H1 (cell line): ENCODE measurements at regions of chr7 and their contacts with region 1.

Region 1: DNA sequence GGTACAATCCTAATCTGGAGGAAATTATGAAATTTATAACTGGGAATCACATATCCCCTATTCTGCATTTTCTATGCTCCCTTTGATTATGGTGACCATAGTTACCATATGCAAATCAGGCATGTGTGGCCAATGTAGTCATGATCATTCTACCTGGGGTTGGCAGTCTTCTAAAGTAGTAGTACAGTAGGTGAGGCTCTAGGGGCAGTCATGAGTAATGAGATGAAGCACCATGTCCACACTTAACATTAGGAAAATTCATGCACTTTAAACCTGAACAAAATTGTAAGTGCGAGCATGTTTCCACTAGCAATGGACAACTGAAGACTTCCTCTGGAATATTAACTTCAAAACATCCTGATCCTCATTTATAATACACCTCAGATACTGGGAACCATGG is 545.9 kb downstream of the SUGCT start:
- DNase-seq: no peak
- H3K4me3 ChIP-seq: no peak overlapping the region
- H3K27ac ChIP-seq: no peak overlapping the region
- H3K4me1 ChIP-seq: no peaks in the 10 kb centered on the region
- H3K27me3 ChIP-seq: no peaks in the 10 kb centered on the region
- CTCF ChIP-seq: peak in 2 of 3 experiments; percentile 31 to 65; a peak in 2 of 4 replicates
- EP300 ChIP-seq: no peak
- POLR2A ChIP-seq: no peak
- RAD21 ChIP-seq: peak; percentile 28 to 41; a peak in 3 of 4 replicates

Region 2: DNA sequence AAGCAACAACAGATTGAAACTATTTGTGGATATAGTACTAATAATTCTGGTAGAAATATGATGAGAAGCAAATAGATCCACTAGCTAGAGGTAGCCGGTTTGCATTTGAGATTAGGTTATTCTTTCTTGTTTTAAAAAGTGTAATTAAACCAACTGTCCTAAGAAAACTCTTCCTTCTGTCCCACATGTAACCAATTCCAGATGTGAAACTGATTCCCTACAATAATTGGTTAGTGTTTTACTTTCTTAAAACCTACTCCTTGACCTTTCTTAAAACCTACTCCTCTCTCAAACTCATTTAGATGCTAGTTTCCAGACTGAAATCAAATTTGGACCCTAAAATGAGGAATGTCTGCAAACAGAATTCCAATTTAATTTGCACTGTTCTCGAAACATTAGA is 24.3 kb before region 1 on chr7:
- CTCF ChIA-PET with region 1: interaction called, 10 read pairs
- POLR2A ChIA-PET with region 1: no interaction called
- DNase-seq: no peak
- H3K4me3 ChIP-seq: no peak overlapping the region
- H3K27ac ChIP-seq: no peak overlapping the region
- H3K4me1 ChIP-seq: no peaks in the 10 kb centered on the region
- H3K27me3 ChIP-seq: no peaks in the 10 kb centered on the region
- CTCF ChIP-seq: no peak
- EP300 ChIP-seq: no peak
- POLR2A ChIP-seq: no peak
- RAD21 ChIP-seq: no peak

Region 3: DNA sequence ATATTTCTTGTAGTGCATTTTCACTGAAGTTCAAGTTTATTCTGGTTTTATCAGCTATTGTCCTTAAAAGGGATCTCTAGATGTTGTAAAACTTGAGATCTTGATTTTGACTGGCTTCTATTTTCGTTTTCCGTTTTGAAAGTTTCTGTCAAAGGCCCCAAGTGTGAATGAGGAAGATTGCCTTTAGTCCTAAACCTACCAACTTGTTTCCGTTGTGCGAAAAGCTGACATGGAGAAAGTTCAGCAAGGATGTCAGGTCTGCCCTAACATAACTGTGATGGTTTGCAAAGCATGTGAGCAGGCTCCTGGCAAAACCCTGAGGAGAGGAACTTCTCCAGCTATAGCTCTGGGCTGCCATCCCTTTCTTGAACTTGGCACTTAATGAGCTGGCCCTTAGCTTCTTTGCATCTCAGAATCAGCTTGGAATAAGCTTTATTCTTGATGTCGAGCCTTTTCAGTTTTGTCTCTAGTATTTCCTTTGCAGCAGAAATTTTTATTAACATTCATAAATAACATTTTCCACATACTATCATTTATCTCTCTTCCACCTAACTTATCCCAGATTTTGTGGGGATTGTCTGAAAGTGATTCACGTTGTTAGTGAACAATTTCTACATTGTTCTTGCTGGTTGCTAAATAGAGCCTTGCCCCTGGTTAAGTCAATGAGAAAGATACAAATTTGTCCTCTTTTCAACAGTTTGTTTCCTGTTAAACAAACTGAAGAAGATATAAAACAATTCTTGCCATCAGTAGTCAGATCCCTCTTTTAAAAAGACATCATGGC is 13.6 kb after region 1 on chr7:
- CTCF ChIA-PET with region 1: interaction called, 28 read pairs
- POLR2A ChIA-PET with region 1: no interaction called
- DNase-seq: no peak
- H3K4me3 ChIP-seq: no peak overlapping the region
- H3K27ac ChIP-seq: no peak overlapping the region
- H3K4me1 ChIP-seq: peaks cover 0 to 2% (median 0%) of the 10 kb centered on the region in 4 experiments; a peak in 1 of 7 replicates
- H3K27me3 ChIP-seq: no peaks in the 10 kb centered on the region; a peak in 1 of 7 replicates
- CTCF ChIP-seq: no peak
- EP300 ChIP-seq: no peak
- POLR2A ChIP-seq: no peak
- RAD21 ChIP-seq: no peak

Region 4: DNA sequence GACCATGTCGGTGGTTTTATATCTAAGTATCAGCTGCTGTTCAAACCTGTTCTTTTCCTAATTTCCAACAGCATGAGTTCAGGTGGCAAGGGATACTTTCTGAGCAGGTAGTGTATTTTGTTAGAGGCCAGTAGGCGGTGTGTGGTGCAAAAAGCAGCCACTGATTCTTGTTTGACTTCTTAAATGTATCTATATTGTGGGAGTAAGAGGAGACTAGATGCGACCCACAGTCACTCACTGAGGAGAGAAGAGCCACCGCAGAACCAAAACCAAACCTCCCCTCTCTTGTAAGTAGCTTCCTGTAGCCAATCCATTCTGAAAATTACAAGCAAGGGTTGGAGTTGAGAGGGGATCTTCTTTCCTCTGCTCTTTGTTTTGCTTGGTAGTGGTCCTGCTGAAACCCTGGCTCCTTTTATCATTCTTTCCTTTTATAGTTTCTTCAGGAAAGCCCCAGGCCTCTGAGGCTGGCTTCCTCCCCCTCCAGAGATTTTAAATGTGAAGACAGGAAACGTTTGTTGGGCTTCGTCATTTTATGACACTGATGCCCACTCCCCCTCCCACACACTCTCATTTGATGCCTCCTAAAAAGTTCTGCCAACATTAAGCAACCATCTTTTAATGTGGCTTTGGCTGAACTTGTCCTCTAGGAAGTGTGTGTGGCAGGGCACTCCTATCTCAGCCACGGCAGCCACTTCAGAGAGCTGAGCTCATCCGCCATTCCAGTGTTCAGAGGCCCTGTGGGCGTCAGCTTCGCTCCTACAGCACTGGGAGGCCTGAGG is 20.2 kb after region 1 on chr7:
- CTCF ChIA-PET with region 1: interaction called, 28 read pairs
- POLR2A ChIA-PET with region 1: no interaction called
- DNase-seq: no peak
- H3K4me3 ChIP-seq: no peak overlapping the region
- H3K27ac ChIP-seq: no peak overlapping the region
- H3K4me1 ChIP-seq: peaks cover 0 to 4% (median 2%) of the 10 kb centered on the region in 4 experiments; a peak in 4 of 7 replicates
- H3K27me3 ChIP-seq: no peaks in the 10 kb centered on the region
- CTCF ChIP-seq: peak in 1 of 3 experiments; percentile 20; a peak in 1 of 4 replicates
- EP300 ChIP-seq: no peak
- POLR2A ChIP-seq: no peak
- RAD21 ChIP-seq: peak; percentile 23 to 28; a peak in 2 of 4 replicates

Region 5: GRCh38 chr7:40899151-40899550 is 218.5 kb after region 1 on chr7:
- CTCF ChIA-PET with region 1: no interaction called
- POLR2A ChIA-PET with region 1: no interaction called
- DNase-seq: no peak
- H3K4me3 ChIP-seq: no peak overlapping the region
- H3K27ac ChIP-seq: no peak overlapping the region
- H3K4me1 ChIP-seq: no peaks in the 10 kb centered on the region
- H3K27me3 ChIP-seq: no peaks in the 10 kb centered on the region
- CTCF ChIP-seq: no peak
- EP300 ChIP-seq: no peak
- POLR2A ChIP-seq: no peak
- RAD21 ChIP-seq: no peak